Activated naive CD8-positive, alpha-beta T cell treated with anti-CD3 and anti-CD28 coated beads, Interleukin-2, amount 10 ng/mL, durations not matched to agents 7 days and 5 days (primary cell): ENCODE measurements at regions of chr17 and their contacts with region 1.

Region 1: DNA sequence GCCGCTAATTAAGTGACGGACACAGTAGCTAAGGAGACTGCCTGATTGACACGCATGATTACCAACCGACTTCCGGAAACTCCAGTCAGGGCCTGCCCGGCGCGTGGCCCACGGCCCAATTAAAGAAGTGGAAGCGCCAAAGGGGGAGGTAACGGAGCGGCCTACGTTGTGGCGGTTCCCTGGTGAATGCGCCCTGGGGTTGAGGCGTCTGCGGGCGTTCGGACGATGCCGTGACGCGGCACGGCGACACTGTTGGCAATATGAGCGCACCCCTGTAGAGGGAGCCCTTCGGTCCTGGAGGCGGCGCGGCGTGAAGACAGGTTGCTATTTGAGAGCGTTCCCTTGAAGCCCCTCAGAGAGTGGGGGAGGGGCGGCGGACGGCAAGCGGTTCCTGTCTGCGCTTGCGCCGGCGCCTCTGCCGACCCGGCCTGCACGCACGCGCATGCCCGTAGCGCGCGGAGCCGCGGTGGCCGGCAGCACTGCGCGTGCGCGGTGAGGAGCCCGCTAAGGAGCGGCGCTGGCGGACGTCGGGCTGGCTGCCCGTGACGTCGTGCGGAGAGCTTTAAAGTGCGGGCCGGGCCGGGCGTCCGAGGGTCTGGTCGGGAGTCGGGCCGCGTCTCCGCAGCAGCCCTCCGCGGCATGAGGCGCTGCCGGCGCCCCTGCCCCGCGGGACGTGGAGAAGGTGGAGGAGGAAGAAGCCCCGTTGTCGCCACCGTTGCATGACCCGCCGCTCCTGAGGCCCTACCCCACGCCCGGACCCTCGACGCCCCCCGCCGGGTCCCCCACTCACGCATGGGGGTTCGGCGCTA is at the start of gene ALKBH5:
- DNase-seq: peak; percentile 99
- ATAC-seq: peak; percentile 90
- H3K4me3 Mint-ChIP-seq: peak within 1 kb of the TSS; percentile 91
- H3K27ac Mint-ChIP-seq: peak within 1 kb of the TSS; percentile 98
- H3K4me1 Mint-ChIP-seq: peaks cover 39% of the 10 kb centered on the region
- H3K27me3 Mint-ChIP-seq: no peaks in the 10 kb centered on the region
- total RNA-seq, gene ALKBH5: 133 to 134 TPM

Region 2: DNA sequence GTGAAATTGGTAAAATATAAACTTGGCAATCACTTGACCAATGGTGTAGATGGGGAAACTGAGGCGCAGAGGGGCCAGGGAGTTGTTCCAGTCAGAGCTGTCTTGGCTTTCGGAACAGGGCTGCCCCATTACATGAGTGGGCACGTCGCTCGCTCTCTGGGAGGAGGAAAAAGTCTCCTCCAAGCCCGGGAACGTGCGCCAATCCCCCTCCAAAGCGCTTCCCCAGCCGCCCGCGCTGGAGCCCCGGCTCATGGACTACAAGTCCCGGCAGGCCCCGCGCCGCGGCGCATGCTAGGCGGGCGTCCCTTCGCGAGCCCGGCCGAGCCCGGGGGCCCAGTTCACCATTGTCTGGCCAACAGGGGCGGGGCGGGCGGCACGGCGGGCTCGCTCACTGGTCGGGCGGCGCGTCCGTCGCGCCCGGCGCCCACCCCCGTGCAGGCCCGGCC is 41.6 kb after region 1 on chr17:
- POLR2A ChIA-PET with region 1: interaction called, 11 read pairs
- DNase-seq: peak; percentile 99
- ATAC-seq: peak; percentile 99
- H3K4me3 Mint-ChIP-seq: peak overlapping the region; percentile 73
- H3K27ac Mint-ChIP-seq: peak overlapping the region; percentile 73
- H3K4me1 Mint-ChIP-seq: peaks cover 17% of the 10 kb centered on the region
- H3K27me3 Mint-ChIP-seq: no peaks in the 10 kb centered on the region